ENCODE measurements at regions of chr15 and their contacts with region 1.

Region 1: DNA sequence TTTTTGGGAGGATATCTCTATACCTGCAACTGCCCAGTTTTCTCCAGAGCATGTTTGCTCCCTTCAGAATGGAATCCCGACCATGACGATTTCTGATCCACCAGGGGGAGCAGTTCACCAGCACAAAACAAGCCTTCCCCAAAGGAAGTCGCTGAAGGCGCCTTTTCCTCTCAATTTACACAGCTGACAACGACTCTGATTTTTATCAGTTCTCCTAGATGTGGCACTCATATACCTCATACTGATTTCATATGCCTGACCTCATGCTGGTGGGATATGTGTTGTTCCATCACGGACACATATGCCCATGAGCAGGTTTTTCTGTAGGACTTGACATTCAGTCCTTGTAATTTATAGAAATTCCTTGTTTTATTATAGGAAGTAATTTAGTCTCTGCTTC is 1028.2 kb downstream of the MCTP2 start:
- DNase-seq: peak; percentile 28 to 77
- ATAC-seq: peak in 7 of 8 donors; percentile 72 to 93 (median 83)
- H3K4me3 ChIP-seq: no peak overlapping the region
- H3K27ac ChIP-seq: peak overlapping the region in 7 of 10 donors; percentile 16 to 58 (median 41)
- H3K4me1 ChIP-seq: peaks cover 0 to 25% (median 11%) of the 10 kb centered on the region in 9 donors
- H3K27me3 ChIP-seq: peaks cover 0 to 16% (median 4%) of the 10 kb centered on the region in 7 donors
- CTCF ChIP-seq: peak; percentile 67 to 90 (median 82)

Region 2: GRCh38 chr15:95032156-95032555 is 227.4 kb before region 1 on chr15:
- intact Hi-C with region 1: loop called in 1 of 10 experiments (anchors 10 kb)
- DNase-seq: no peak
- ATAC-seq: no peak
- H3K4me3 ChIP-seq: no peak overlapping the region
- H3K27ac ChIP-seq: no peak overlapping the region
- H3K4me1 ChIP-seq: no peaks in the 10 kb centered on the region
- H3K27me3 ChIP-seq: no peaks in the 10 kb centered on the region
- CTCF ChIP-seq: no peak

Region 3: DNA sequence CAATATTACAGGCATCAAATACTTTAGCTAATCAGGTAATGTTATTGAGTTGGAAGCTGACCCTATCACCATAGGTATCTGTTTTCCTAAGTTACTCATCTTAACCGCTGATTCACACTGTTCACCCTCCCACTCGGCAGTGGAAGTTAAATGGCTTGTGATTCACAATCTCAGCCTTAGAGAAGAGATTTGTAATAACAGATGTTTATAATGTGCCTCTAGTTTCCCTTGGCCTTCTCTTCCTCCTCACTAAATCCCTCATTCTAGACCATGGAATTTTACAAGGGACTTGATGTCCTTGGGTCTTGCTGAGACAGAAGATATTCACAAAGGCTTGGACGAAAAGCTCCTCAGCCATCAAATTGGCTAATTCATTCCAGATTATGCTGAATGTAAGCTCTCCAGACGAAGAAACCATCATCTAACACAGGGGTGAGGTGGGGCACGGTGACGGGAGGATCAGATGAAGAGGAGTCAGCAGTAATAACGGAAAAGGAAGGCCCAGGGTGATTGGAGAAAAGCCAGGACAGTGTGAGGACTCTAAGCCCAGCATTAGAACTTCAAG is 96.5 kb before region 1 on chr15:
- intact Hi-C with region 1: loop called in 1 of 10 experiments (anchors 10 kb)
- DNase-seq: no peak
- ATAC-seq: peak in 2 of 8 donors; percentile 41 to 42
- H3K4me3 ChIP-seq: no peak overlapping the region
- H3K27ac ChIP-seq: peak overlapping the region in 4 of 10 donors; percentile 33 to 57 (median 39)
- H3K4me1 ChIP-seq: peaks cover 0 to 7% (median 0%) of the 10 kb centered on the region in 9 donors
- H3K27me3 ChIP-seq: no peaks in the 10 kb centered on the region
- CTCF ChIP-seq: no peak

Region 4: GRCh38 chr15:95464509-95464908 is 205.0 kb after region 1 on chr15:
- intact Hi-C with region 1: loop called in 1 of 10 experiments (anchors 10 kb)
- DNase-seq: no peak
- ATAC-seq: no peak
- H3K4me3 ChIP-seq: no peak overlapping the region
- H3K27ac ChIP-seq: no peak overlapping the region
- H3K4me1 ChIP-seq: peaks cover 0 to 14% (median 3%) of the 10 kb centered on the region in 9 donors
- H3K27me3 ChIP-seq: no peaks in the 10 kb centered on the region
- CTCF ChIP-seq: no peak

Region 5: DNA sequence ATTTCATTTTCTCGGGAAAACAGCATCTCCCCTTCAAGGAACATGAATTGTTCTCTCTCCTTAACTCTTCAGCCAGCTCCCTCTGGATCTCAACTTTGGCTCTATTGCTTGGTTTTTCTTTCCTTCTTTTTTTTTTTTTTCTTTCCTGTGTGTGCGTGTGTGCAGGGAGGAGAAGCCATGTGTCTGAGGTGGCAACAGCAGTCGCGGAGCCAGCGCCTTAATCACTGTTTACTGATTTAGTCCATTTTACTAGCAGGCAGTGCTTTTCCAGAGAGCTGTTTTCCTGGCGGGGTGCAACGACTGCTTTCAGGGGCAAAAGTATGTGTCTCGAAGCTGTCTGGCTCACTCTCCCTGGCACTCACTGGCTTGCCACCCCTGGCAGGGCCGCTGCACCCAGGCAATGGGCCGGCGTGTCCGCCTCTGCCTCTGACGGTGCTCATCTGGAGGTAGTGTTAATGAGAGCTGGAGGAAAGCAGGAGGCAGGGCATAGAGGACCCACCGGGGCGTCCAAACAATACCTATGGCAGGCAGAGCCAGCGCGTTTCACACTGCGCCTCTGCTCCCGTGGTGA is 235.5 kb after region 1 on chr15:
- intact Hi-C with region 1: no loop called
- DNase-seq: peak in 1 of 2 donors; percentile 12
- ATAC-seq: peak in 3 of 8 donors; percentile 34 to 56 (median 49)
- H3K4me3 ChIP-seq: peak overlapping the region in 2 of 10 donors; percentile 5 to 7
- H3K27ac ChIP-seq: peak overlapping the region in 4 of 10 donors; percentile 7 to 57 (median 32)
- H3K4me1 ChIP-seq: peaks cover 0 to 28% (median 0%) of the 10 kb centered on the region in 9 donors
- H3K27me3 ChIP-seq: no peaks in the 10 kb centered on the region
- CTCF ChIP-seq: no peak

Region 6: DNA sequence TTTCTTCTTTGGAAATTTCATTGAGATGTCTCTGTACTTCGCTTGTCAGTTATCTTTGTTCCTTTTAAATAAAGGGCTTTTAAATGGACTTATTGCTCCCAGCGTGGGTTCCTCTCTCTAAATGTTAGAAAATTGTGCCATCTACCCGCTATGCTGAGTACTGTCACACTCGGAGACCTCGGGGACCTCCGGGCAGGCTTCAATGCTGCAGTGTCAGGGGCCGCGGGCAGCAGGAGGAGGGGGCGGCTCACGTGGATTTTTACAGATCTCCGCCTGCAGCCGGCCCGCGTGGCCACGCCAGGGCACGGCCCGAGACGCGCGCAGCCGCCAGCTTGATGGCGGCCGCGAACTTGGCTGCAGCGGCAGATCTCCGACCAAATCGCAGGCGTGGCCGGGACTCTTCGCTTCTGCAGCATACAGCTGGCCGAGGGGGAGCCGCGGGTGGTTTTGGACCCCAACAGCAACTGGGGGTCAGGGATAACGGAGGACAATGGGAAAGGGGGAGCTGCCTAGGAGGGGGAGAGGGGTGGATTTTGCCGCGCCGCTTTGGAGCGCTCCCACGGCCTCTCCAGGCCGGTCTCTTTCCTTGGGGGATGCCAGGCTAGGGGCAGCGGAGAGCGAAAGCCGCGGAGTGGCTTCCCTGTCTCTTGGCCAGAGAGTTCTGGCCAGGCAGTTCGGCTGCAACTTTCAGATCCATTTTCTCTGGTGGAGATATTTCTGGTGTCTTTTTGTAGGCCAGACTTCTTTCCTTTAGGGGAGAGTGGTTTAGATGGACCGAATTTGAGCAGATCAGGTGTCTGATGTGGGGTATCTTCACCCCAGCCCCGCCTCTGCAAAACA is 1086.3 kb after region 1 on chr15:
- intact Hi-C with region 1: loop called (anchors 1 to 10 kb)
- DNase-seq: peak; percentile 69 to 82
- ATAC-seq: peak; percentile 58 to 85 (median 70)
- H3K4me3 ChIP-seq: peak overlapping the region; percentile 2 to 81 (median 56)
- H3K27ac ChIP-seq: peak overlapping the region; percentile 59 to 94 (median 90)
- H3K4me1 ChIP-seq: peaks cover 0 to 83% (median 36%) of the 10 kb centered on the region in 9 donors
- H3K27me3 ChIP-seq: peaks cover 4 to 100% (median 77%) of the 10 kb centered on the region in 7 donors
- CTCF ChIP-seq: peak; percentile 40 to 83 (median 65)

Region 7: DNA sequence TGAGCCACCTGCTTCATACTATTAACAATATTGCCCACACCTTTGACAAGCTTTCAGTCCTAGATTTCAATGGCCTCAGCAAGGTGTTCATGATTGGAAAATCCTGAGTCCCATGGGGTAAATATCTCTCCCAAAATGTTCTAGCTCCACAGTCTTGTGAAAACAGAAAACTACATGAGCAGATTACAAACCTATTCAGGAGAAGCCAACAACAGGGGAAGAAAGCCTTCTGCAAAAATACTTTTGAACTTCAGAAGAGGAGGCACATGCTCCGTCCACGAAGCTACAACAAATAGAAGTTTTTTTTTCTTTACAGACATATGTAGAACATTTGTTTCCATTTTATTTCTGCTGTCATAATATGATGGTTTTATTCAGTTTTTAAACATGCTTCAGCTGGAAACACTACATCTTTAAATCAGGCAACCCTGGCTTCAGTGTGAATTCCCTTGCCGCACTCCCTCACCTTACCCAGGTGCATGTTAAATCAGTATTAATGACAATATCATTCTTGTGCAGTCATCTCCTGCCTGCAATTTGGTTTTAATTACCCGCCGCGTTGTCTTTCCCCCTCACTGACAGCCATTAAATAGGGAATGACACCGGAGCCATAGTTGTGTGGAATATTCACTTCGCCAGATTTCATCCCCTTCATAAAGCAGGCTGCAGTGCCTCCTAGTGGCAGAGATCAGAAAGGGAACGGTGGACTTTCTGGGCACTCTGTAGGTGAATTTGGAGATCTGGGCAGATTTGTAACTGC is 1975.5 kb after region 1 on chr15:
- intact Hi-C with region 1: loop called in 5 of 10 experiments (anchors 5 to 10 kb)
- DNase-seq: peak; percentile 15 to 44
- ATAC-seq: peak in 3 of 8 donors; percentile 63 to 65 (median 63)
- H3K4me3 ChIP-seq: peak overlapping the region in 1 of 10 donors; percentile 6
- H3K27ac ChIP-seq: no peak overlapping the region
- H3K4me1 ChIP-seq: peaks cover 0 to 4% (median 0%) of the 10 kb centered on the region in 9 donors
- H3K27me3 ChIP-seq: peaks cover 0 to 9% (median 0%) of the 10 kb centered on the region in 7 donors
- CTCF ChIP-seq: peak; percentile 65 to 89 (median 86)